ENCODE measurements at regions of chr9 and their contacts with region 1.

Region 1: DNA sequence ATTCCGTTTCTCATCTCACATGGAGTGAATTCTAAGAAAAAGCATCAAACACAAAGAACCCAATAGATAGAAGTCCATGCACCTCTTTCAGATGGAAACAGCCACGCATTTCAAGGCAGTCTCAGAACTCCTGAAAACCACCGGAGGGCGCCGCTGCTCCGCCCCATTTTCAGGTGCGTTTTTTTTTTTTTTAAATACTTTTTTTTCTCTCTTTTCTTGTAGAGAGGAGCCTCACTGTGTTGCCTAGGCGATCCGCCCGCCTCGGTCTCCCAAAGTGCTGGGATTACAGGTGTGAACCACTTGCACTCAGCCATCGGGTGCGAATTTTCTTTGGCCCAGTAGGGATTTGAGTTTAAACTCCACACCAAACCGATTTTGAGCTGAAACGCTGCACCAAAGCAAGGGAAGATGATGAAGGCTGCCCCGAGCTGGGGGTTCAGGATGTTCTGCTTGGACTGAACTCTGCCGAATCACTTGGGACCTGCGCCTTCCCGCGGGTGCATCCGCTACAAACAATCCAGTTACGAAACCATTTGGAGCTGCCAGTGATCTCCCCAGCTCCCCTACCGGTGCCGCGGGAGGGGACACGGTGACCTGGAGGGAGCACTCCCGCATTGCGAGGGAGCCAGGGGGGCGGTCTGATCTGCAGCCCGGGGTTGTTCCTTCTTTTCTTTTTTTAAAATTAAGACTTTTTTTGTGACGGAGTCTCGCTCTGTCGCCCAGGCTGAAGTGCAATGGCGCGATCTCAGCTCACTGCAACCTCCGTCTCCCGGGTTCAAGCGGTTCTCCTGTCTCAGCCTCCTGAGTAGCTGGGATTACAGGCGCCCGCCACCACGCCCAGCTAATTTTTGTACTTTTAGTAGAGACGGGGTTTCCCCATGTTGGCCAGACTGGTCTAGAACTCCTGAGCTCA is 1.4 kb downstream of the PTGR1 start:
- DNase-seq: peak; percentile 49 to 64
- ATAC-seq: peak; percentile 44 to 71 (median 69)
- H3K4me3 ChIP-seq: peak overlapping the region; percentile 57 to 99 (median 79)
- H3K27ac ChIP-seq: peak overlapping the region; percentile 36 to 95 (median 88)
- H3K4me1 ChIP-seq: peaks cover 0 to 24% (median 10%) of the 10 kb centered on the region in 9 donors
- H3K27me3 ChIP-seq: peaks cover 0 to 18% (median 0%) of the 10 kb centered on the region in 7 donors
- CTCF ChIP-seq: peak; percentile 30 to 80 (median 60)

Region 2: GRCh38 chr9:111621895-111622480 is 23.9 kb after region 1 on chr9:
- intact Hi-C with region 1: loop called in 1 of 10 experiments (anchors 2 kb)
- DNase-seq: peak in 1 of 2 donors; percentile 14
- ATAC-seq: peak in 6 of 8 donors; percentile 56 to 77 (median 70)
- H3K4me3 ChIP-seq: no peak overlapping the region
- H3K27ac ChIP-seq: no peak overlapping the region
- H3K4me1 ChIP-seq: peaks cover 0 to 13% (median 0%) of the 10 kb centered on the region in 9 donors
- H3K27me3 ChIP-seq: no peaks in the 10 kb centered on the region
- CTCF ChIP-seq: peak; percentile 42 to 87 (median 75)

Region 3: DNA sequence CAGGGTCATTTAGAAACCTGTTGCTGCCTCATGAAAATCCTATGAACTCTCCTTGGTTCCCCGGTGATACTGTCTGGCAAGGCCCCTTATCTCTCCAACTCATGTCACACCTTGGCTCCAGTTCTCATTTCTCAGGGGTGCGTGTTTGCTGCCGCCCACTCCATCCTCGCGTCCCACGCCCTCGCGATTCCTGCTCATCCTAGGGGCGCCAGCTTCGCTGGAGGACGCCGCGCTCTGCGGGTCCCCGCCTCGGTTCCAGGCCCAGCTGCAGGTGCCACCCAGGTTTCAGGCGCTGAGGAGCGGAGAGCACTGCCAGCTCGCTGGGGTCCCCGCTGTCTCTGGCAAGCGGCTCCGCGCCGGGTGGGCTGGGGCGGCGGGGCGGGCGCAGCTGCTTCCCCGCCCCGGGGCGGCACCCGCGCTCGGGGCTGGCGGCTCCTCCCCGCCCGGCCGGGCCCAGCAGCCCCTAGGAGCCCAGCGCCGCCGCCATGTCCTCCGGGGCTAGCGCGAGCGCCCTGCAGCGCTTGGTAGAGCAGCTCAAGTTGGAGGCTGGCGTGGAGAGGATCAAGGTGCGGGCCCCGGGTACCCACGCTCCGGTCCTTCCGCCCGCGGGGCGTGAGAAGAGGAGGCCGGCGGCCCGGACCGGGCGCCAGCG is 63.2 kb after region 1 on chr9 and contains the start of gene GNG10:
- intact Hi-C with region 1: loop called in 2 of 10 experiments (anchors 2 kb)
- DNase-seq: peak; percentile 48 to 73
- ATAC-seq: peak; percentile 89 to 96 (median 94)
- H3K4me3 ChIP-seq: peak within 1 kb of the TSS; percentile 69 to 95 (median 78)
- H3K27ac ChIP-seq: peak within 1 kb of the TSS; percentile 49 to 95 (median 80)
- H3K4me1 ChIP-seq: peaks cover 0 to 28% (median 16%) of the 10 kb centered on the region in 9 donors
- H3K27me3 ChIP-seq: no peaks in the 10 kb centered on the region
- CTCF ChIP-seq: no peak
- total RNA-seq, gene GNG10: 24.5 to 34.3 (median 26.6) TPM

Region 4: GRCh38 chr9:111683392-111683791 is 85.3 kb after region 1 on chr9:
- intact Hi-C with region 1: loop called in 1 of 10 experiments (anchors 10 kb)
- DNase-seq: no peak
- ATAC-seq: no peak
- H3K4me3 ChIP-seq: no peak overlapping the region
- H3K27ac ChIP-seq: peak overlapping the region in 1 of 10 donors; percentile 11
- H3K4me1 ChIP-seq: no peaks in the 10 kb centered on the region
- H3K27me3 ChIP-seq: no peaks in the 10 kb centered on the region
- CTCF ChIP-seq: no peak

Region 5: DNA sequence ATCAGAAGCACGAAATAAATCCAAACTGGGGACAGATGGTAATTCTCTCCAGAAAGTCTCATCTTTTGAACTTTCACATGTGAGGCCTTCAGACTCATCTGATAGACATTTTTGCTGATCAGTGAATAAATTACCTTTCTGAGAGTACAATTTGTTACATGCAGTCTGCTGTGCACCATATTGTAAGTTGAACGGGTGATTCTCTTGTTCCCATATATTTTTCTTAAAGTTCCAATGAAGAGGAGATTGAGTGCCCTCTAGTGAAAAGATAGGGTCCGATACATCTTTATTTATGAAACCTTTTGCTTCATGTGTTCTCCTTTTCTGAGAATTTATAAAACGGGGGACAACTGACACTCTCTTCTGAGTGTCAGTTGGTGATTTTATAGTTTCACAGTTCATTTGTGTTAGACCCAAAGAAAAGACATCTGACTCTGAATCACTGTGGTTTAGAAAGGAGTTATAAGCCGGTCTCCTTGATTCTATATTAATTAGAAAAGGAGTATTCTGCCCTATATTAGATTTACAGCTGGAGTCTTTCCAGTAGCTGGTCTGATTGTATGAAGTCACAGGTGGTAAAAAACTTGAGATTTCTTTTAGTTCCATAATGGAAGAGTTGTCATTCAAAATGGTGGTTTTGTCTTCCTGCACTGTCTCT is 93.7 kb after region 1 on chr9:
- intact Hi-C with region 1: loop called in 5 of 10 experiments (anchors 2 to 10 kb)
- DNase-seq: no peak
- ATAC-seq: no peak
- H3K4me3 ChIP-seq: no peak overlapping the region
- H3K27ac ChIP-seq: no peak overlapping the region
- H3K4me1 ChIP-seq: no peaks in the 10 kb centered on the region
- H3K27me3 ChIP-seq: no peaks in the 10 kb centered on the region
- CTCF ChIP-seq: peak in 5 of 9 donors; percentile 24 to 50 (median 45)

Measured in heart right ventricle (tissue), 16 donors.